Motor neuron (in vitro differentiated cells): ENCODE measurements at regions of chr20 and their contacts with region 1.

Region 1: GRCh38 chr20:9407805-9408421 is 106.5 kb upstream of the LAMP5 start:
- ATAC-seq: peak; percentile 83 to 94 (median 88)
- H3K4me3 ChIP-seq: no peak overlapping the region
- H3K27ac ChIP-seq: no peak overlapping the region
- H3K4me1 ChIP-seq: peaks cover 0 to 19% of the 10 kb centered on the region in 2 donors

Region 2: GRCh38 chr20:9609887-9610502 is 202.1 kb after region 1 on chr20:
- in situ Hi-C with region 1: loop called (anchors 10 to 25 kb)
- ATAC-seq: peak; percentile 46 to 67 (median 54)
- H3K4me3 ChIP-seq: no peak overlapping the region
- H3K27ac ChIP-seq: no peak overlapping the region
- H3K4me1 ChIP-seq: peaks cover 14 to 24% of the 10 kb centered on the region in 2 donors

Region 3: DNA sequence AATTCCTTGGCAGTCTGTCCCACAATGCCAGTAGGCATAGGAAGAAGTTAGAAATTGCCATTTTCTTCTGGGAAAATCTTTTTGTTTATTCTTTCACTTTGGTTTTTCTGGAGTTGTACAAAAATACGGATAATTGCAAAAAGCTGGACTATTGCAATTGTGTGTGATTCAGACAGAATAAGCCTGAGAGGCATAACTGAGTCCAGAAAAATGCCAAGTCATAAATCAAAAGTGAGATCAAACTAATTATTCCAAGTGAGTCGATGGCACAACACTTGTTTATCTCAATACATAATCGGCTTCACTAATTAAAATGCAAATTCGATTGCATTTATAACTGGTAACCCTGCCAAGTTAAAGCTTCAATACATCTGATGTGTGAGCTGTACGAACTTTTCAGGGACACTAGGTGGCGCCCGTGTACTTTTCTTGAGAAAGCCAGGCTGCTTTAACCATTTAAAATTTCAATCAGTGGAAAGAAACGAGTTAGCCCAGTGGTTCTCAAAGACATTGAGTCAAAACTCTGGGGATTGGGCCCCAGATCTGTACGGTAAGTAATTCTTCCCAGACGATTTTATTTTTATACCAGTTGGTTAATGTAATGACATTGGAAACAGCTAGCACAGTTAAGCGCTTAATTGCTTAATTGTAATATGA is 209.0 kb after region 1 on chr20:
- in situ Hi-C with region 1: loop called in 3 of 9 experiments (anchors 10 to 25 kb)
- ATAC-seq: peak; percentile 53 to 80 (median 62)
- H3K4me3 ChIP-seq: no peak overlapping the region
- H3K27ac ChIP-seq: no peak overlapping the region
- H3K4me1 ChIP-seq: no peaks in the 10 kb centered on the region

Region 4: DNA sequence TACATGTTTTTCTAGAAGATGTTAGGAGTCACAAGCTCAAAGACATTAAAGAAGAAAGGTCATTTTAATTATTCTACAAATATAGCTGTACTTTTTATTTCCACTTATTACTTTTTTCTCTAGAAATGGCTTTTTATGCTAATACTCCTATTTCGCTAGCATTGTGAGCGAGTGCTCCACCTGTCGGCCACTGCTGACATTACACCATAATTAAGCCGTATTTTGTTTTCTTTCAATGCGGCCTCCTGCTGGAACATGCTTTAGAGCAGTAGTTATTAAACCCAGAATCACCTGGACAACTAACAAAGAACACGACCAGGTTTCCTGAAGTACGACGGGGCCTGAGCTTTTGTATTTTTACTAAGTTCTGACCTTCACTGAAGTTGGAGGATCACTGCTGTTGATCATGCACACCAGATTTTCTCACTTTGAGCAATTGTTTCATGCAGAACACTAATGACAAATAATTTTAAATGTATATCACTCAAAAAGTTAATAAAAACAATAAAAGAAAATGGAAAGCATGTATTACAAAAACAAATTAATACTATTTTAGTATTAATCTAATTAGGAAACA is 505.0 kb after region 1 on chr20:
- in situ Hi-C with region 1: loop called in 1 of 9 experiments (anchors 25 kb)
- ATAC-seq: peak in 2 of 8 experiments; percentile 29 to 34
- H3K4me3 ChIP-seq: no peak overlapping the region
- H3K27ac ChIP-seq: no peak overlapping the region
- H3K4me1 ChIP-seq: no peaks in the 10 kb centered on the region

Region 5: GRCh38 chr20:10090588-10091166 is 682.8 kb after region 1 on chr20:
- in situ Hi-C with region 1: loop called in 1 of 9 experiments (anchors 25 kb)
- ATAC-seq: peak; percentile 64 to 94 (median 82)
- H3K4me3 ChIP-seq: no peak overlapping the region
- H3K27ac ChIP-seq: no peak overlapping the region
- H3K4me1 ChIP-seq: peaks cover 0 to 2% of the 10 kb centered on the region in 2 donors

Region 6: GRCh38 chr20:10434467-10434831 is 1026.5 kb after region 1 on chr20:
- in situ Hi-C with region 1: loop called in 1 of 9 experiments (anchors 25 kb)
- ATAC-seq: peak; percentile 71 to 81 (median 80)
- H3K4me3 ChIP-seq: peak overlapping the region; percentile 58 to 91 (median 80)
- H3K27ac ChIP-seq: peak overlapping the region; percentile 38 to 88
- H3K4me1 ChIP-seq: peaks cover 5 to 10% of the 10 kb centered on the region in 2 donors